CD8-positive, alpha-beta T cell (primary cell): ENCODE measurements at regions of chr1 and their contacts with region 1.

Region 1: DNA sequence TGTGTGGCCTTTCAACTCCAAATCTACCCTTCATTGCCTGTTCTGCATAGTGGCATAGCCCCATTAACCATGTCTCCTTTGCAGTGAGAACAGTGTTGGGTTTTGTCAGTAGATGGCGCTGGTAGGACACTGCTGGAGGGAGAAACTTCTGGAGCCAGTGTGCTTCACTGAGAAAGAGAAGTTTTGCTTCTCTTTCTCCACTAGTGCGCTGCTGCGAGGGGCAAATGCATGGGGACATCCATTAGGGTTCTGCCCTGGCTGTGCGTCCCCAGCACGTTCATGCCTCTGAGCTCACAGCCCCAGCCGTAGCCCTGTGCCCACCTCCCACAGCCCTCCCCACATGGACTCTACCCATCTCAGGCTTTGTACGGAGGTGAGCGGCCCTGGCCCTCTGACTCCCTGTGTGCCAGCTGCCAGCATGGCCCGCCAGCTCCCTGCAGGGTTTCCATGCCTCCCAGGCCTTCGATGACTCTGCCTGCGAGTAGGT is 53.1 kb downstream of the RIMS3 start:
- DNase-seq: peak; percentile 44 to 80 (median 68)
- ATAC-seq: peak; percentile 95
- H3K4me3 ChIP-seq: no peak overlapping the region
- H3K4me3 Mint-ChIP-seq: no peak overlapping the region
- H3K27ac ChIP-seq: no peak overlapping the region
- H3K27ac Mint-ChIP-seq: no peak overlapping the region
- H3K4me1 ChIP-seq: no peaks in the 10 kb centered on the region
- H3K4me1 Mint-ChIP-seq: no peaks in the 10 kb centered on the region
- H3K27me3 ChIP-seq: no peaks in the 10 kb centered on the region
- H3K27me3 Mint-ChIP-seq: no peaks in the 10 kb centered on the region
- CTCF ChIP-seq: peak; percentile 82

Region 2: DNA sequence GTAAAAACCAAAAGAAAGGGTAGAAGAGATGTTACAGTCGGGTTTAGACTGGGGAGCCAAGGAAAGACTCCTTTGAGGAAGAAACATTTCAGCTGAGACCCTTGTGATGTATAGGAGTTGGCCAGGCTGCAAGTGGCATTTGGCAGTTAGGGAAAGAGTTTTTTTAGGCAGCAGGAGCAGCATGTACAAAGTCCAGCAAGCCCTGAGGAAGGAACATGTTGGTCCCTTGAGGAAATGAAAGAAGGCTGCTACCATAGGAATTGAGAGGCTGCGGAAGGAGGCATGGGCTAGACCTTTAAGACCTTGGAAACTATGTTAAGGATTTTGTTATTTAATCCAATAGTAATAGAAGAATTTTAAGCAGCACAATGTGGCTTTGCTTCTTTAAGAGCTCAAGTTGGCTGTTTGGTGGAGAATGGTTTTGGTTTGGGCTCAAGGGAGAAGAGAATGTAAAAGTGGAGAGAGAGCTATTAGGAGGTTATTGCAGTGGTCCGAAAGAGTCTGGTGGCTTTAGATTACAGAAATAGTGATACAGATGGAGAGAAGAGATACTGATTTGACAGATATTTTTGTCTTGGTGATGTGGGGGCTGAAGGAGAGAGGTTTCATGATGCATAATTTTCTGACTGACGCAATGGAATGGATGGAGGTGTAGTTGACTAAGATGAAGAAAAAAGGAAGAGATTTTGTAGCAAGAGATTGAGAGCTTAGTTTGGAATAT is 212.2 kb before region 1 on chr1:
- CTCF ChIA-PET with region 1: no interaction called
- POLR2A ChIA-PET with region 1: no interaction called
- intact Hi-C with region 1: no loop called
- DNase-seq: peak in 1 of 9 experiments; percentile 45
- ATAC-seq: no peak
- H3K4me3 ChIP-seq: no peak overlapping the region
- H3K4me3 Mint-ChIP-seq: peak overlapping the region; percentile 44
- H3K27ac ChIP-seq: peak overlapping the region in 1 of 2 experiments; percentile 26
- H3K27ac Mint-ChIP-seq: peak overlapping the region; percentile 84
- H3K4me1 ChIP-seq: peaks cover 93% of the 10 kb centered on the region
- H3K4me1 Mint-ChIP-seq: peaks cover 91% of the 10 kb centered on the region
- H3K27me3 ChIP-seq: no peaks in the 10 kb centered on the region
- H3K27me3 Mint-ChIP-seq: no peaks in the 10 kb centered on the region
- CTCF ChIP-seq: no peak

Region 3: DNA sequence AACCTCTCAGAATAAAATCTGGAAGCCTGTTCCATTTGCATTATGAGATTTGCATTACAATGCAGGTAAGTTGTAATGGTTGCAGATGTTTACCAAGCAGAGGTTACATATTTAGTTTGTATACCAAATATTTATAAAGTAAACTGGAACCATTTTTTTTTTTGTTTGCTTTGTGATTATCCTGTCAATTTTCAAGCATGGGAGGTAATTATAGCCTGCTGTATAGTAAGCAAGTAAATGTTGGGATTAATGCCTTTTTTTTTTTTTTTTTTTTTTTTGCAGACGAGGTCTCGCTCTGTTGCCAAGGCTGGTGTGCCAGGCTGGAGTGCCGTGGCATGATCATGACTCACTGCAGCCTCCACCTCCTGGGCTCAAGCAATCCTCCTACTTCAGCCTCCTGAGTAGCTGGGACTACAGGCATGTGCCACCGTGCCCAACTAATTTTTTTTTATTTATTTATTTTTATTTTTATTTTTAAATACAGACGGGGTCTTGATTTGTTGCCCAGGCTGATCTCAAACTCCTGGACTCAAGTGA is 100.1 kb after region 1 on chr1:
- CTCF ChIA-PET with region 1: no interaction called
- POLR2A ChIA-PET with region 1: no interaction called
- intact Hi-C with region 1: no loop called
- DNase-seq: no peak
- ATAC-seq: no peak
- H3K4me3 ChIP-seq: no peak overlapping the region
- H3K4me3 Mint-ChIP-seq: no peak overlapping the region
- H3K27ac ChIP-seq: peak overlapping the region in 1 of 2 experiments; percentile 78
- H3K27ac Mint-ChIP-seq: no peak overlapping the region
- H3K4me1 ChIP-seq: peaks cover 48% of the 10 kb centered on the region
- H3K4me1 Mint-ChIP-seq: peaks cover 71% of the 10 kb centered on the region
- H3K27me3 ChIP-seq: no peaks in the 10 kb centered on the region
- H3K27me3 Mint-ChIP-seq: no peaks in the 10 kb centered on the region
- CTCF ChIP-seq: no peak

Region 4: GRCh38 chr1:40951943-40952743 is 339.8 kb after region 1 on chr1:
- CTCF ChIA-PET with region 1: interaction called, 3 read pairs
- POLR2A ChIA-PET with region 1: no interaction called
- intact Hi-C with region 1: loop called (anchors 1 kb)
- DNase-seq: peak; percentile 25 to 71 (median 61)
- ATAC-seq: peak; percentile 64
- H3K4me3 ChIP-seq: no peak overlapping the region
- H3K4me3 Mint-ChIP-seq: no peak overlapping the region
- H3K27ac ChIP-seq: no peak overlapping the region
- H3K27ac Mint-ChIP-seq: no peak overlapping the region
- H3K4me1 ChIP-seq: no peaks in the 10 kb centered on the region
- H3K4me1 Mint-ChIP-seq: peaks cover 5% of the 10 kb centered on the region
- H3K27me3 ChIP-seq: no peaks in the 10 kb centered on the region
- H3K27me3 Mint-ChIP-seq: peaks cover 30% of the 10 kb centered on the region
- CTCF ChIP-seq: peak; percentile 88

Region 5: GRCh38 chr1:41003640-41004220 is 391.3 kb after region 1 on chr1:
- CTCF ChIA-PET with region 1: no interaction called
- POLR2A ChIA-PET with region 1: no interaction called
- intact Hi-C with region 1: loop called in 1 of 2 experiments (anchors 5 kb)
- DNase-seq: peak; percentile 71 to 94 (median 90)
- ATAC-seq: peak; percentile 98
- H3K4me3 ChIP-seq: no peak overlapping the region
- H3K4me3 Mint-ChIP-seq: no peak overlapping the region
- H3K27ac ChIP-seq: peak overlapping the region in 1 of 2 experiments; percentile 51
- H3K27ac Mint-ChIP-seq: peak overlapping the region; percentile 23
- H3K4me1 ChIP-seq: peaks cover 15% of the 10 kb centered on the region
- H3K4me1 Mint-ChIP-seq: peaks cover 20% of the 10 kb centered on the region
- H3K27me3 ChIP-seq: no peaks in the 10 kb centered on the region
- H3K27me3 Mint-ChIP-seq: no peaks in the 10 kb centered on the region
- CTCF ChIP-seq: peak; percentile 33

Region 6: DNA sequence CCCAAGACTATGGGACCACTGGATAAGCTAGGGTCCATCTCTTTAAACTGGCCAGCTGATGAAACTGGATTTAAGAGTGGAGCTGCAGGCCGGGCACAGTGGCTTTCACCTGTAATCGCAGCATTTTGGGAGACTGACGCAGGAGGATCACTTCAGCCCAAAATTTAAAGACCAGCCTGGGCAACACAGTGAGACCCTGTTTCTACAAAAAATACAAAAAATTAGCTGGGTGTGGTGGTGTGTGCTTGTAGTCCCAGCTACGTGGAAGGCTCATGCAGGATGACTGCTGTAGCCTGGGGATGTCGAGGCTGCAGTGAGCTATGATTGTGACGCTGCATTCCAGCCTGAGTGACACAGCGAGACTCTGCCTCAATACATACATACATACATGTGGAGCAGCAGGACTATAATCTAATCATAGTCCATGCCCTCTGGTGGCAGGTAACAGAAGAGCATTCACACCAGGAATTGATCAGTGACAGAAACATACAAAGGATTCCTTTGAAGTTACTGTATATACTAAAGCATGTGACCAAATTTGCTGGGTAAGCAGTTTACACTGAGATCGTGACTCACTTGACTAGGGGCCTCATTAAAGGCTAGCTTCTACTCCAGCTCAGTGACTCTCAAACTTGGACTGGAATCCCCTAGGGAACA is 510.6 kb after region 1 on chr1:
- CTCF ChIA-PET with region 1: no interaction called
- POLR2A ChIA-PET with region 1: no interaction called
- intact Hi-C with region 1: loop called in 1 of 2 experiments (anchors 5 kb)
- DNase-seq: peak in 2 of 9 experiments; percentile 5 to 13
- ATAC-seq: no peak
- H3K4me3 ChIP-seq: no peak overlapping the region
- H3K4me3 Mint-ChIP-seq: no peak overlapping the region
- H3K27ac ChIP-seq: no peak overlapping the region
- H3K27ac Mint-ChIP-seq: no peak overlapping the region
- H3K4me1 ChIP-seq: no peaks in the 10 kb centered on the region
- H3K4me1 Mint-ChIP-seq: no peaks in the 10 kb centered on the region
- H3K27me3 ChIP-seq: no peaks in the 10 kb centered on the region
- H3K27me3 Mint-ChIP-seq: no peaks in the 10 kb centered on the region
- CTCF ChIP-seq: no peak